ENCODE measurements at regions of chr1 and their contacts with region 1.

Region 1: DNA sequence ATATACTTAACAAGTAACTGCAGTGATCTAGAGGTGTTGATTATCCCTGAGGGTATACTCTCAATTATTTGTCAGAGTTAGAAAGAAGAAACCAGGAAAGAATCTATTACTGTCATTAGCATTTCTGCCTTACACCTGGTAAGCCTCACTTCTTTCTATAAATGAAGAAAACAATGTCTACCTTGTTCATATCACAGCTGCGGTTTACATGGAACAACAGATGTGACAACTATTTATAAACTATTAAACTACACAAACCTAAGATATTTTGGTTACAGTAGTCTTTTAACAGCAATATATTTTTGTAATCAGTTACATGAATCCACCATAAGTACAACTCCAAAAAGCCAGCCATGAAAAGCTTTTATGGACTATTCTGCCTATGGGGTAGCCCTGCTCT is 40.7 kb downstream of the GON4L start:
- DNase-seq: no peak
- H3K4me3 ChIP-seq: no peak overlapping the region
- H3K27ac ChIP-seq: no peak overlapping the region
- H3K4me1 ChIP-seq: no peaks in the 10 kb centered on the region
- H3K27me3 ChIP-seq: no peaks in the 10 kb centered on the region
- CTCF ChIP-seq: no peak
- EP300 ChIP-seq: no peak
- POLR2A ChIP-seq: no peak

Region 2: DNA sequence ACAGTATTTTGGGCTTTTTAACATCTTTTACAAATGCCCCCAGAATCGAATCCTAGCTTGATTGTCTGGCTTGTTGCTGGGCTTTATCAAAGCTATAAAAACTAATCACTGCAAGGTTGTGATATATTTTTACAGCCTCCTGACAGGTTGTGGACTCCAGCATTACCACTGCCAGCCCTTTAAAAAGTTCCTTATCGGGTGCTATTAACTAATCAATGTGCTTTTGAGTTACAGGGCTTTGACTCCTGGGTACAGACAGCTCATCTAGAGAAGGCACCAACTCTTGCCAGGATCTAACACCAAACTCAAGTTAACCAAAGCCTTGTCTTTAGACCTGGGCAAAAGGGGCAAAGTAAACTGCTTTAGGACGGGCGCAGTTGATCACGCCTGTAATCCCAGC is 24.0 kb after region 1 on chr1:
- intact Hi-C with region 1: loop called (anchors 2 kb)
- DNase-seq: no peak
- H3K4me3 ChIP-seq: no peak overlapping the region
- H3K27ac ChIP-seq: no peak overlapping the region
- H3K4me1 ChIP-seq: peaks cover 0 to 3% (median 0%) of the 10 kb centered on the region in 4 donors
- H3K27me3 ChIP-seq: no peaks in the 10 kb centered on the region
- CTCF ChIP-seq: no peak
- EP300 ChIP-seq: no peak
- POLR2A ChIP-seq: no peak